Transverse colon (tissue), 4 donors: ENCODE measurements at regions of chr5 and their contacts with region 1.

Region 1: GRCh38 chr5:62779010-62779422 is 200.4 kb downstream of the LRRC70 start:
- DNase-seq: no peak
- H3K4me3 ChIP-seq: no peak overlapping the region
- H3K27ac ChIP-seq: no peak overlapping the region
- H3K4me1 ChIP-seq: no peaks in the 10 kb centered on the region
- H3K27me3 ChIP-seq: no peaks in the 10 kb centered on the region
- CTCF ChIP-seq: peak; percentile 56 to 75 (median 73)
- EP300 ChIP-seq: no peak
- POLR2A ChIP-seq: no peak

Region 2: DNA sequence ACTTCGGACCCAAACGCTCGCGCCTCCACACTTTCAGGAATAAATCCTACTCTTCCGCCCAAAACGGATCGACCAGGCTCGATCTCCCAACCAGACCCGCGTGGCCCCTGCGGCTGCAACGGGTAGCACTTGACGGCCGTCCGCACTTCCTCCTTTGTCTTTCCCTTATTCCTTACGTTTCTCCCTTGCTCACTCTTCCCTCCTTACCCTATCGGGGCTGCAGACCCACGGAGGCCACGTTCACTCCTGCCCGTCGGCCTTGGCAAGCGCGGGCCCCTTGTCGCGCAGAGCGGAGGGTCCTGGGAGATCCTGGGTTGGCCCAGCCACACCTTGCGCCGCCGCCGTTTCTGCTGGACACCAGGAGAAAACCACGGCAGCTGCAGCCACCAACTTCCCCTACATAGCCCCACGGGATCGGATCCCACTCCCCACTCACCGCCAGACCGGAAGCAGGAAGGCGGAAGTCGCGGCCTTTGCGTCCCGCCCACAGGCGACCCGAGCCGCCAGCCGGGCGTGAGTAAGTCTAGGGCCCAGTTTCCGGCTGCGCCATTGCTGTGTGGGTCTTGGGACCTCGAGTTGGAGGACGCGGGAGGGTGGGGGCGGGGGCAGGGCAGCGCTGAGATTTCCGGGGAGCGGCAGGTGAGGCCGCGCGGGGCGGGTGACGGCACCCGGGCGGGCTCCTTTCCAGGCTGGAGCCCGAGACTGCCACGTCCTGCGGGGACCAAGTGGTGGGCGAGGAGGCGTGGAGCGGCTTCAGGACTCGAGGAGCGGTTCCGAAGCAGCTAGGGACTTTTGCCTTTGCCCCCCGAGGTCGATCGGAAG is 1616.8 kb before region 1 on chr5 and contains the start of gene SMIM15:
- in situ Hi-C with region 1: no loop called
- intact Hi-C with region 1: no loop called
- DNase-seq: peak; percentile 93
- H3K4me3 ChIP-seq: peak within 1 kb of the TSS; percentile 70 to 87 (median 84)
- H3K27ac ChIP-seq: peak within 1 kb of the TSS; percentile 92 to 96 (median 94)
- H3K4me1 ChIP-seq: peaks cover 6 to 34% (median 24%) of the 10 kb centered on the region in 4 donors
- H3K27me3 ChIP-seq: no peaks in the 10 kb centered on the region
- CTCF ChIP-seq: peak in 2 of 5 experiments; percentile 33 to 55
- EP300 ChIP-seq: no peak
- POLR2A ChIP-seq: peak; percentile 85
- total RNA-seq, gene SMIM15: 6.6 to 56.9 (median 30.9) TPM

Region 3: DNA sequence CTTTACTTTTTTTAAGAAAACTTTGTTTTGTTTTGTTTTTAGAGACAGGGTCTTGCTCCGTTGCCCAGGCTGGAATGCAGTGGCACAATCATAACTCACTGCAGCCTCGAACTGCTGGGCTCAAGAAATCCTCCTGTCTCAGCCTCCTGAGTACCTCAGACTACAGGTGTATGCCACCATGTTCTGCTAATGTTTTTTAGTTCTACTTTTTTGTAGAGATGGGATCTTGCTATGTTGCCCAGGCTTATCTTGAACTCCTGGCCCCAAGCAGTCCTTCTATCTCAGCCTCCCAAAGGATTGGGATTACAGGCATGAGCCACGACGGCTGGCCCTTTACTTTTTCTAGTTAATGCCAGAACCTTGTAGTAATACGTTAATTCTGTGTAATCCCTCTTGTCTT is 330.5 kb before region 1 on chr5:
- in situ Hi-C with region 1: loop called (anchors 10 to 25 kb)
- intact Hi-C with region 1: loop called (anchors 10 kb)
- DNase-seq: no peak
- H3K4me3 ChIP-seq: no peak overlapping the region
- H3K27ac ChIP-seq: no peak overlapping the region
- H3K4me1 ChIP-seq: peaks cover 0 to 3% (median 0%) of the 10 kb centered on the region in 4 donors
- H3K27me3 ChIP-seq: no peaks in the 10 kb centered on the region
- CTCF ChIP-seq: no peak
- EP300 ChIP-seq: no peak
- POLR2A ChIP-seq: no peak

Region 4: GRCh38 chr5:62460578-62460983 is 318.4 kb before region 1 on chr5:
- in situ Hi-C with region 1: loop called in 3 of 4 experiments (anchors 10 to 25 kb)
- intact Hi-C with region 1: loop called (anchors 10 kb)
- DNase-seq: no peak
- H3K4me3 ChIP-seq: no peak overlapping the region
- H3K27ac ChIP-seq: no peak overlapping the region
- H3K4me1 ChIP-seq: no peaks in the 10 kb centered on the region
- H3K27me3 ChIP-seq: no peaks in the 10 kb centered on the region
- CTCF ChIP-seq: peak; percentile 50 to 74 (median 62)
- EP300 ChIP-seq: no peak
- POLR2A ChIP-seq: no peak

Region 5: DNA sequence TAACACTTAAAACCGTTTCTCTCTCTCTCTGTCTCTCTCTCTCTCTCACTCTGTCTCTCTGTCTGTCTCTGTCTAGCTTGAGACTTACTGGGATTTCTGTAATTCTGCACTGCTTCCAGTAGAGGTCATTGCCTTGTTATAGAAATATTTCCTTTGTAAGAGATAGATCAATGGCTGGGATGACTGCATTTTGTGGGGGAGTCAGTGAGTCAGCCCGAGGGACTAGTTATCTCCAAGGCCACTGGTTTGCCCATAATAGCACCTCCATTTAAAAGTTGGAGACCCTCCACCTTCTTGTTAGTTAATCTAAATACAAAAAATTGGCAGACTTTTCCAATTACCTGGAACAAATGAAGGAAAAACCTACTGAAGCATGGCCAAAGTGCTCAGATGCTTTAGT is 346.8 kb after region 1 on chr5:
- in situ Hi-C with region 1: no loop called
- intact Hi-C with region 1: no loop called
- DNase-seq: no peak
- H3K4me3 ChIP-seq: no peak overlapping the region
- H3K27ac ChIP-seq: no peak overlapping the region
- H3K4me1 ChIP-seq: no peaks in the 10 kb centered on the region
- H3K27me3 ChIP-seq: no peaks in the 10 kb centered on the region
- CTCF ChIP-seq: no peak
- EP300 ChIP-seq: no peak
- POLR2A ChIP-seq: no peak